CD8-positive, alpha-beta T cell (primary cell): ENCODE measurements at regions of chrX and their contacts with region 1.

Region 1: DNA sequence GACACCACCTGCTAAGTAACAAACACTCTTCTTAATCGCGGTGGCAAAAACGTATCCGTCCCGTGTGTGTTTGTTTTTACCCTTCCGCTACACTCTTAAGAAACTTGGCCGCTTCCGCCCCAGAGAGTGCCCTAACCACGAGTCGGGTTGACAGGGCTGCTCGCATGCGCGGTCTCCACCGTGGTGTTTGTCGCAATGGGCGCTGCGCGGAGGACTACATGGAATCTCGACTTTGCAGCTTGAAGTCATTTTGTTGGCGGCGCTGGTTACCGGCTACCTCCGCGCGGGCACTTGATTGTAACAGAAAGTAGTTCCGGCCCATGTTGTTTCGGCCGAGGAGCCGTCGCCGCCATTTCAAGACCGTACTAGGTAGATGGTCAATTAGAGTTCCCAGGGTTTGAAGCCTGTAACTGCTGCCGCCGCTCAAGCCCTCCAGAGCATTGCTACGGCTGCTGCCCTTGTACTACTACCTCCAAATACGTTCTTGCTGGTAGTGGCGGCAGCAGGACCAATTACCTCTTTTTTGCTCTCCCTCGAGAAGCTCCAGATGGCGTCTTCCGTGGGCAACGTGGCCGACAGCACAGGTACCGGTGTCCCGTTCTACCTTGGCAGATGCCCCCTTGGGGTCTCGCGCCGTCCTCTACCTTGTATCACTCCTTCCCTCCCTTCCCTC is at the start of gene OGT:
- DNase-seq: peak; percentile 84 to 98 (median 93)
- ATAC-seq: peak; percentile 70
- H3K4me3 ChIP-seq: peak within 1 kb of the TSS; percentile 71 to 90
- H3K4me3 Mint-ChIP-seq: peak within 1 kb of the TSS; percentile 98
- H3K27ac ChIP-seq: peak within 1 kb of the TSS; percentile 92 to 98
- H3K27ac Mint-ChIP-seq: peak within 1 kb of the TSS; percentile 98
- H3K4me1 ChIP-seq: peaks cover 15% of the 10 kb centered on the region
- H3K4me1 Mint-ChIP-seq: peaks cover 36% of the 10 kb centered on the region
- H3K27me3 ChIP-seq: no peaks in the 10 kb centered on the region
- H3K27me3 Mint-ChIP-seq: no peaks in the 10 kb centered on the region
- CTCF ChIP-seq: no peak
- total RNA-seq, gene OGT: 295 to 297 TPM

Region 2: DNA sequence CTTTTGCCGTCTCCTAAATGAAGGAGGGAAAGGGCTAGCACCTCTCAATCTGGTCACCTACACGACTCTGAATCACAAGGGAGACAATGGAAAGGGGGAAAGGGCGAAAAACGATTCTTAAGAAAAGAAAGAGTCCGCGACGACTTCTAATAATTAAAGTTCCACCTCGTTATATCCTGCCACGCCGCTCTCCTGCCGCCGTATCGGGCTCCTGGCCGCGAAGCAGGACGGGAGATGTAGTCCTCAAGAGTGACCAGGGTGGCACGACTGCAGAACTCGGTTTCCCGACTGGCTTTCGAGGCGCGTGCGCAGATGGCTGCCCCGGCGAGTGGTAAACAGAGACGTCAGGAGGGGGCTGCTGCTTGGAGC is 437.4 kb before region 1 on chrX and contains the start of gene FOXO4:
- CTCF ChIA-PET with region 1: no interaction called
- POLR2A ChIA-PET with region 1: no interaction called
- intact Hi-C with region 1: loop called (anchors 5 to 10 kb)
- DNase-seq: peak; percentile 74 to 94 (median 88)
- ATAC-seq: peak; percentile 82
- H3K4me3 ChIP-seq: peak within 1 kb of the TSS; percentile 73 to 78
- H3K4me3 Mint-ChIP-seq: peak within 1 kb of the TSS; percentile 93
- H3K27ac ChIP-seq: peak within 1 kb of the TSS; percentile 34 to 68
- H3K27ac Mint-ChIP-seq: peak within 1 kb of the TSS; percentile 93
- H3K4me1 ChIP-seq: peaks cover 30% of the 10 kb centered on the region
- H3K4me1 Mint-ChIP-seq: peaks cover 37% of the 10 kb centered on the region
- H3K27me3 ChIP-seq: no peaks in the 10 kb centered on the region
- H3K27me3 Mint-ChIP-seq: no peaks in the 10 kb centered on the region
- CTCF ChIP-seq: no peak
- total RNA-seq, gene FOXO4: 24.1 to 32.6 TPM

Region 3: GRCh38 chrX:71283403-71284143 is 249.3 kb before region 1 on chrX and contains the start of gene NONO:
- CTCF ChIA-PET with region 1: no interaction called
- POLR2A ChIA-PET with region 1: interaction called, 7 read pairs
- intact Hi-C with region 1: loop called in 1 of 2 experiments (anchors 10 kb)
- DNase-seq: peak; percentile 56 to 98 (median 80)
- ATAC-seq: peak; percentile 85
- H3K4me3 ChIP-seq: peak within 1 kb of the TSS; percentile 65 to 86
- H3K4me3 Mint-ChIP-seq: peak within 1 kb of the TSS; percentile 99
- H3K27ac ChIP-seq: peak within 1 kb of the TSS; percentile 90 to 98
- H3K27ac Mint-ChIP-seq: peak within 1 kb of the TSS; percentile 100
- H3K4me1 ChIP-seq: peaks cover 26% of the 10 kb centered on the region
- H3K4me1 Mint-ChIP-seq: peaks cover 24% of the 10 kb centered on the region
- H3K27me3 ChIP-seq: no peaks in the 10 kb centered on the region
- H3K27me3 Mint-ChIP-seq: no peaks in the 10 kb centered on the region
- CTCF ChIP-seq: no peak
- total RNA-seq, gene NONO: 488 to 500 TPM

Region 4: DNA sequence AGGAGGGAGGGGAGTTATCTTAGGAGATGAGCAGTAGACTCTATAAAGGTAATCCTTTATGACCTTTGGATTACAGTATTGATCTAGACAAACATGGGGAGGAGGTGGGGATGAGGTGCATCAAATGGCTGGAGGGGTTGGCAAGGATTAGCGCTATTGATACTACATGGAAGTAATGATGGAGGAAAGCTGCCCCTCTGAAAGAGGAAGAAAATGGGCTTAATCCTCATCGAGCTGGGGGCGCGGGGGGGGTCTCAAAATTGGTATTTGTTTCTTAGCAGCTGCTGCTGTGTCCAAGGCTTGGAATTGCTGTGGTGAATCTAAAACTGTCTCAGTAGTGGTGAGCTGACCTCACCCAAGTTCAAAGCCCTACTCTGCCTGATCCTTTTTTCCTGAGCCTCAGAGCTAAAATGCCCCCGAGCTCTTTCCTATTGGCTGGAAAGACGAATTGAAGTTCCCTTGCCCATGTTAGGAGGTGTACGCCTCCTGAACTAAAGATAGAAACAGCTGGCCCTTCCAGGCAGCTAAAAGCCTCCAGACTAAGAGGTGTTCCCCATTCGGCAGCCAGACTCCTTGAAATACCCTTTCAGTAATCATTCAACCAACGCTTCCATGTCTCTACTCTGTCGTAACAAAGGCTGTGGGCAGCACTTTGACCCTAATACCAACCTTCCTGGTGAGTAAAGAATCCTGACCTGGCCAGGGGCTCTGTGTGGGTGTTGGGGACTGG is 231.5 kb before region 1 on chrX and contains the start of gene ITGB1BP2:
- CTCF ChIA-PET with region 1: no interaction called
- POLR2A ChIA-PET with region 1: no interaction called
- intact Hi-C with region 1: no loop called
- DNase-seq: no peak
- ATAC-seq: no peak
- H3K4me3 ChIP-seq: no peak within 1 kb of the TSS
- H3K4me3 Mint-ChIP-seq: no peak within 1 kb of the TSS
- H3K27ac ChIP-seq: no peak within 1 kb of the TSS
- H3K27ac Mint-ChIP-seq: no peak within 1 kb of the TSS
- H3K4me1 ChIP-seq: no peaks in the 10 kb centered on the region
- H3K4me1 Mint-ChIP-seq: no peaks in the 10 kb centered on the region
- H3K27me3 ChIP-seq: no peaks in the 10 kb centered on the region
- H3K27me3 Mint-ChIP-seq: no peaks in the 10 kb centered on the region
- CTCF ChIP-seq: no peak
- total RNA-seq, gene ITGB1BP2: 2.2 TPM

Region 5: DNA sequence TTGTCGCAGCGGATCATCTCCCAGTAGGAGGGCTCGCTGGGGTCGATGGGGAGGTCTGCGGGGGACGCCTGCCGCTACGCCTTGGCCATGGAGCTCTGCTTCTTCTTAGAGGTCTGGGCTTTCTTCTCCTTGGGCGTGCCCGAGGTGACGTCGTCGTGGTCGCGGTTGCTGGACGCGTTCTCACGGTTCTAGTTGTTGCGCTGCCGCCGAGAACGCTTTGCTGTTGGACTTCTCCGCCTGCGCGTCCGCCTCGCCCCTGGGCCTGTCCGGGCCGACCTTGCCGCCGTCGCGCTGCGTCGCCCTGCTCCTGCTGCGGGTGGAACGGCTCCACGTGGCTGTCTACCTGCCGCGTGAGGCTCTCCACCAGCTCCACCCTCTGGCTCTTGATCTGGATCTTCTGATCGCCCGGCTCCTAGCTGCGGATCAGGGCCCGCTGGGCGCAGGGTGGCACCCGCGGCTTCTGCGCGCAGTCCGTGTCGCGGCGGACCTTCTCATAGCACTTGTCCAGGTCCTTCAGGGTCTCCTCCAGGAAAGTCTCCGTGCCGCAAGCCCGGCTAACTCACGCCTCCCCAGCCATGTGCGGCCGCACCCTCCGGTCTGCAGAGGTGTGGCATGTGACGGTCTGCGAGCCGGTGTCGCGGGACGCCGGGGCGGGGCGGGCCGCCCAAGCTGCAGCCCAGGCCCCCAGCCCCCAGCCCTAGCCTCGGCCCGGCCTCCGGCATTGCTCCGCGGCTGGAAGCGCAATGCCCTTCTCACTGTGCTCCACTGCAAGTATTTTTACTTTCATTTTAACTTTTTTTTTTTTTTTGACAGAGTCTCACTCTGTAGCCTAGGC is 40.4 kb before region 1 on chrX:
- CTCF ChIA-PET with region 1: no interaction called
- POLR2A ChIA-PET with region 1: interaction called, 42 read pairs
- intact Hi-C with region 1: loop called (anchors 2 to 5 kb)
- DNase-seq: peak; percentile 5 to 70 (median 48)
- ATAC-seq: peak; percentile 85
- H3K4me3 ChIP-seq: peak overlapping the region; percentile 67 to 80
- H3K4me3 Mint-ChIP-seq: peak overlapping the region; percentile 85
- H3K27ac ChIP-seq: peak overlapping the region; percentile 42 to 60
- H3K27ac Mint-ChIP-seq: peak overlapping the region; percentile 57
- H3K4me1 ChIP-seq: peaks cover 4% of the 10 kb centered on the region
- H3K4me1 Mint-ChIP-seq: peaks cover 9% of the 10 kb centered on the region
- H3K27me3 ChIP-seq: no peaks in the 10 kb centered on the region
- H3K27me3 Mint-ChIP-seq: no peaks in the 10 kb centered on the region
- CTCF ChIP-seq: no peak

Region 6: DNA sequence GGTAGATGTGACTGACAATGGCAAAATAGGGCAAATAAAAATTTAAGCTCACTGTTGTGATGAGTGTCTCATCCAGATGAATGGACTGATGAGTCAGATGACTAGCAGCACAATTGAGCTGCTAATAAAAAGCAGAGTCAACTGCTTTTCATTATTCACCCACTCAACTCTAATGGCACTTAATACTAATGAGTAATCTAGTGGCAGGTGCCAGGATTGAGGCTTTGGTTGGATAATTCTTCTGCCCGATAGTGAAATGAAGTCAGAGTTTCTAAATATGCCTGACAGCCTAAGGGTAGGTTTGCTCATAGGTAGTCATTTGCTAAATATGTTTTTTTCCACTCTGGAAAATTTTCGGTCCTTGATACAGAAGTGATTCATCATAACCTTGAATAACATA is 10.4 kb after region 1 on chrX:
- CTCF ChIA-PET with region 1: interaction called, 13 read pairs
- POLR2A ChIA-PET with region 1: interaction called, 26 read pairs
- intact Hi-C with region 1: loop called in 1 of 2 experiments (anchors 1 kb)
- DNase-seq: no peak
- ATAC-seq: peak; percentile 25
- H3K4me3 ChIP-seq: no peak overlapping the region
- H3K4me3 Mint-ChIP-seq: peak overlapping the region; percentile 65
- H3K27ac ChIP-seq: peak overlapping the region in 1 of 2 experiments; percentile 50
- H3K27ac Mint-ChIP-seq: peak overlapping the region; percentile 78
- H3K4me1 ChIP-seq: peaks cover 66% of the 10 kb centered on the region
- H3K4me1 Mint-ChIP-seq: peaks cover 67% of the 10 kb centered on the region
- H3K27me3 ChIP-seq: no peaks in the 10 kb centered on the region
- H3K27me3 Mint-ChIP-seq: no peaks in the 10 kb centered on the region
- CTCF ChIP-seq: no peak

Region 7: DNA sequence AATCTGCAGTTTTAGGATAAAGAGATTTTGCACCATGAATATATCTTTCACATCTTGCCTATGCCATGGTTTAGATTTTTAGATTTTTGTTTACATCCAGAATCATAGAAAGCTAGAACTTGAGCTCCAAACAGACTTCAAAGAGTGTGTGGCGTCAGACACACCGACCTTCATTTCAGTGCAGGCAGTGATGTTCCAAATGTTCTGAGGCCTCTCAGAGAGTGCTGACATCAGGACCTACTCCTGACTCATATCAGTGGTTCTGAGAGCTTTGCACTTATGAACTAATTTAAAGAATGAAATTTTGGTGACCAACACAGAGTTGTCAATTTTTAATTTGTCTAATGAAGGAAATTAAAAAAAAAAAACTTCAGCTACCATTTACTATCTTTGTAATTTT is 67.1 kb after region 1 on chrX:
- CTCF ChIA-PET with region 1: no interaction called
- POLR2A ChIA-PET with region 1: no interaction called
- intact Hi-C with region 1: no loop called
- DNase-seq: peak in 4 of 9 experiments; percentile 23 to 61 (median 44)
- ATAC-seq: peak; percentile 93
- H3K4me3 ChIP-seq: no peak overlapping the region
- H3K4me3 Mint-ChIP-seq: no peak overlapping the region
- H3K27ac ChIP-seq: no peak overlapping the region
- H3K27ac Mint-ChIP-seq: no peak overlapping the region
- H3K4me1 ChIP-seq: peaks cover 4% of the 10 kb centered on the region
- H3K4me1 Mint-ChIP-seq: peaks cover 36% of the 10 kb centered on the region
- H3K27me3 ChIP-seq: no peaks in the 10 kb centered on the region
- H3K27me3 Mint-ChIP-seq: no peaks in the 10 kb centered on the region
- CTCF ChIP-seq: no peak

Region 8: GRCh38 chrX:71622576-71623450 is 89.9 kb after region 1 on chrX:
- CTCF ChIA-PET with region 1: no interaction called
- POLR2A ChIA-PET with region 1: interaction called, 19 read pairs
- intact Hi-C with region 1: loop called (anchors 1 to 5 kb)
- DNase-seq: peak; percentile 39 to 90 (median 68)
- ATAC-seq: peak; percentile 53
- H3K4me3 ChIP-seq: peak overlapping the region; percentile 6 to 21
- H3K4me3 Mint-ChIP-seq: peak overlapping the region; percentile 63
- H3K27ac ChIP-seq: peak overlapping the region; percentile 59 to 85
- H3K27ac Mint-ChIP-seq: peak overlapping the region; percentile 93
- H3K4me1 ChIP-seq: peaks cover 63% of the 10 kb centered on the region
- H3K4me1 Mint-ChIP-seq: peaks cover 66% of the 10 kb centered on the region
- H3K27me3 ChIP-seq: no peaks in the 10 kb centered on the region
- H3K27me3 Mint-ChIP-seq: no peaks in the 10 kb centered on the region
- CTCF ChIP-seq: no peak